ENCODE measurements at regions of chr3 and their contacts with region 1.

Region 1: GRCh38 chr3:58630076-58630709 is 36.4 kb downstream of the FAM3D start:
- DNase-seq: peak; percentile 89
- H3K4me3 Mint-ChIP-seq: no peak overlapping the region
- H3K27ac Mint-ChIP-seq: no peak overlapping the region
- H3K4me1 Mint-ChIP-seq: no peaks in the 10 kb centered on the region
- H3K27me3 Mint-ChIP-seq: peaks cover 5% of the 10 kb centered on the region

Region 2: DNA sequence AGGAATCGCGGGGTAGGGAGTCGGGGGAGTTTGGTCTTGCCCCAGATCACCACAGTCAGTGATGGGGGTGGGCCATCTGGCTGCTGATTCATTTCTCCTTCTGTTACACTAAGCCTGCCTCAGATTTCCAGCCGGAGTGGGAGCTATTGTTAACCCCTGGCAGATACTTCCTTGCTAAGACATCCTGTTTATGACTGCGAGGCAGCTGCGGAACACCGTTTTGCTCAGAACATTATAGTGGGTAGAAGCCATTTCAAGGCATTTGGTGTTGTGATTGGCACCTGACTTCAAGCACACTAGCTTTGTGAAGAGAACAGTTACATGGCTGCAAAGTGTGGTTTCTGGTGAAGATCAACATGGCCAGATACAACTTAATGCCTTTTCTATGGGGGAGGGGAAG is 548.1 kb before region 1 on chr3:
- intact Hi-C with region 1: no loop called
- DNase-seq: peak; percentile 76
- H3K4me3 Mint-ChIP-seq: peak overlapping the region; percentile 51
- H3K27ac Mint-ChIP-seq: peak overlapping the region; percentile 77
- H3K4me1 Mint-ChIP-seq: peaks cover 30% of the 10 kb centered on the region
- H3K27me3 Mint-ChIP-seq: no peaks in the 10 kb centered on the region

Region 3: DNA sequence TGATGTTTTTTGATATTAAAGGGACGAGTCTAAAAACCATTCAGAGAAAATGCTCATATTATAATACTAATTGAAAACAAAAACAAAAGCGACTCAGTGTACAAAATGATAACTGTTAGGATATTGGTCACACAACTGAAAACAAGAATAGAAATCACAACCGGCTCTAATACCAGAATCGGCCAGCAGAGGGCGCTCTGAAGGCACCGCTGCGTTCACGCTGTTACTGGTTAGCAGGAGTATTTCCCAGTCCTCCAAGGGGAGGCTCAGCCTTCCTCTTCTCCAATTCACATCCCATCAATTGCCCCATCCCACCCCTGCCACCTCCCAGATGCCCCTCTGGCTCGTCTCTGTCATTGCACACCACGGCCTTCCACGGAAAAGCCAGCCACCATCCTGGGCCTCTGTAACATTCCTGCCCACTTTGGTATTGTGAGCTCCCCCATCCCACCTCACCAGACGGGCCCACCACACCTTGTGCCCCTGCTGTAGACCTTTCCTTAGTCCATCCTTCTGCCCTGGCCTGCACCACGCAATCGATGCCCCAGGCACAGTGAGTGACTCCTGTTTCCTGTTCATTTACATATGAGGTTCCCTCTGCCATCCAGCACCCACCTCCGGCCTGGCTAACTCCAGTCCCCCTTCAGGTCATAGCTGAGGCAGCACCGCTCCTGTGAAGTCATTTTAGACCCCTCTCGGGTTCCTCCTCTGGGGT is 61.5 kb before region 1 on chr3:
- intact Hi-C with region 1: loop called (anchors 1 kb)
- DNase-seq: peak; percentile 91
- H3K4me3 Mint-ChIP-seq: no peak overlapping the region
- H3K27ac Mint-ChIP-seq: no peak overlapping the region
- H3K4me1 Mint-ChIP-seq: peaks cover 4% of the 10 kb centered on the region
- H3K27me3 Mint-ChIP-seq: peaks cover 7% of the 10 kb centered on the region

Region 4: GRCh38 chr3:58647381-58648141 is 17.4 kb after region 1 on chr3:
- intact Hi-C with region 1: no loop called
- DNase-seq: no peak
- H3K4me3 Mint-ChIP-seq: no peak overlapping the region
- H3K27ac Mint-ChIP-seq: no peak overlapping the region
- H3K4me1 Mint-ChIP-seq: no peaks in the 10 kb centered on the region
- H3K27me3 Mint-ChIP-seq: no peaks in the 10 kb centered on the region